K562 (cell line): ENCODE measurements at regions of chr13 and their contacts with region 1.

Region 1: GRCh38 chr13:22929381-22930126 is 251.2 kb upstream of the SGCG start:
- DNase-seq: no peak
- ATAC-seq: no peak
- H3K4me3 ChIP-seq: no peak overlapping the region
- H3K27ac ChIP-seq: no peak overlapping the region
- H3K4me1 ChIP-seq: peaks cover 17 to 19% of the 10 kb centered on the region in 2 experiments; a peak in 4 of 5 replicates
- H3K27me3 ChIP-seq: no peaks in the 10 kb centered on the region
- CTCF ChIP-seq: no peak
- EP300 ChIP-seq: no peak
- POLR2A ChIP-seq: no peak
- RAD21 ChIP-seq: no peak

Region 2: GRCh38 chr13:23547000-23547590 is 617.5 kb after region 1 on chr13:
- CTCF ChIA-PET with region 1: no interaction called
- POLR2A ChIA-PET with region 1: no interaction called
- in situ Hi-C with region 1: no loop called
- intact Hi-C with region 1: no loop called
- DNase-seq: no peak
- ATAC-seq: no peak
- H3K4me3 ChIP-seq: no peak overlapping the region
- H3K27ac ChIP-seq: no peak overlapping the region
- H3K4me1 ChIP-seq: no peaks in the 10 kb centered on the region; a peak in 1 of 5 replicates
- H3K27me3 ChIP-seq: peaks cover 2 to 7% of the 10 kb centered on the region in 2 experiments; a peak in 3 of 5 replicates
- CTCF ChIP-seq: no peak
- EP300 ChIP-seq: no peak
- POLR2A ChIP-seq: no peak
- RAD21 ChIP-seq: no peak

Region 3: GRCh38 chr13:24355103-24355502 is 1425.5 kb after region 1 on chr13:
- CTCF ChIA-PET with region 1: no interaction called
- POLR2A ChIA-PET with region 1: no interaction called
- in situ Hi-C with region 1: loop called (anchors 10 kb)
- intact Hi-C with region 1: no loop called
- DNase-seq: no peak
- ATAC-seq: no peak
- H3K4me3 ChIP-seq: no peak overlapping the region
- H3K27ac ChIP-seq: no peak overlapping the region
- H3K4me1 ChIP-seq: no peaks in the 10 kb centered on the region
- H3K27me3 ChIP-seq: 0 out of 5 replicates have a peak, but pooled peaks cover 0 to 3% of the 10 kb centered on the region in 2 experiments
- CTCF ChIP-seq: no peak
- EP300 ChIP-seq: no peak
- POLR2A ChIP-seq: no peak
- RAD21 ChIP-seq: no peak